Dorsolateral prefrontal cortex (tissue), 120 donors: ENCODE measurements at regions of chr6 and their contacts with region 1.

Region 1: GRCh38 chr6:108113557-108114519 is 39.3 kb upstream of the OSTM1 start:
- DNase-seq: no peak
- H3K4me3 ChIP-seq: peak overlapping the region in 50 of 59 donors; percentile 13 to 67 (median 42)
- H3K27ac ChIP-seq: no peak overlapping the region
- H3K27me3 ChIP-seq: peaks cover 0 to 74% (median 33%) of the 10 kb centered on the region in 45 donors
- CTCF ChIP-seq: peak; percentile 38 to 80 (median 65)

Region 2: DNA sequence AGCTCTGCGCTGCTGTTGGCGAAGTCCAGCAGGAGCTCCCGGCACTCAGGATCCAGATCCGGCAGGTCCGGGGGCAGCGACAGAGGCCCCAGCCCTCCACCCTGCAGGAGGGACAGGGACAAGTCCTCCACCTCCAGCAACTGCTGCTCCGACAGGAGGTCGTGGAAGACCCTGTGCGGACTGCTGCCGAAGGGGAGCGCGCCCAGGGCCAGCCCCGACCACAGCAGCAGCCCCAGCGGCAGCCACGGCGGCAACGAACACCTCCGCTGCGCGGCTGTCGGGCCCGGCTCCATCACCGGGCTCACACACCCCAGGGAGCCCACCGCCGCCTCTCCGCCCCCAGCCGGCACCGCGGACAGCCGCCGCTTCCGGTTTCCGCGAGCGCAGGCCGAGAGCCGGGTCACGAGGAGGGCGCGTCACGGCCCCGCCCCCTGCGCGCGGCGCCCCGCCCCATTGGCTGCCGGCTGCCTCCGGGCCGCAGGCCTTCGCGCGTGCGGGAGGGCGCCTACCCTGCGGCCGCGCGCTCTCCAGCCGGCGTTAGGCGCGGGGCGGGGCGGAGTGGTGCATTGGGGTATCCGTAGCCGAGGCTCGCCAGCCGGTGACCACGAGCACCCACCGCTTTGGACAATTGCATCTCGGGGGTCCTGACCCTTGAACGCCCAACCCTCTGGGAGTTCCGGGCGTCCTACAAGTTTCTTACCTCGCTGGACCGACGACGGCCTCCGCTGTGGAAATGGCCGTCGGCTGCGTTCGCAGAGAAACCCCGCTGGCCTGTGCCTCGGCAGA is 39.3 kb before region 1 on chr6 and contains the start of gene OSTM1:
- intact Hi-C with region 1: loop called in 1 of 2 experiments (anchors 5 kb)
- DNase-seq: peak; percentile 76 to 96 (median 86)
- H3K4me3 ChIP-seq: peak within 1 kb of the TSS; percentile 59 to 100 (median 98)
- H3K27ac ChIP-seq: peak within 1 kb of the TSS; percentile 3 to 94 (median 85)
- H3K27me3 ChIP-seq: no peaks in the 10 kb centered on the region
- CTCF ChIP-seq: peak in 23 of 56 donors; percentile 3 to 64 (median 22)
- total RNA-seq, gene OSTM1: 19.6 to 54.7 (median 38.3) TPM

Region 3: GRCh38 chr6:108168501-108169463 is 54.9 kb after region 1 on chr6:
- intact Hi-C with region 1: loop called in 1 of 2 experiments (anchors 5 kb)
- DNase-seq: no peak
- H3K4me3 ChIP-seq: peak overlapping the region in 58 of 59 donors; percentile 22 to 71 (median 52)
- H3K27ac ChIP-seq: peak overlapping the region in 40 of 59 donors; percentile 6 to 81 (median 63)
- H3K27me3 ChIP-seq: peaks cover 5 to 87% (median 63%) of the 10 kb centered on the region in 45 donors
- CTCF ChIP-seq: peak in 32 of 56 donors; percentile 11 to 51 (median 22)

Region 4: GRCh38 chr6:108438918-108439317 is 325.1 kb after region 1 on chr6:
- intact Hi-C with region 1: no loop called
- DNase-seq: no peak
- H3K4me3 ChIP-seq: no peak overlapping the region
- H3K27ac ChIP-seq: peak overlapping the region in 2 of 59 donors; percentile 8 to 56
- H3K27me3 ChIP-seq: no peaks in the 10 kb centered on the region
- CTCF ChIP-seq: no peak

Region 5: DNA sequence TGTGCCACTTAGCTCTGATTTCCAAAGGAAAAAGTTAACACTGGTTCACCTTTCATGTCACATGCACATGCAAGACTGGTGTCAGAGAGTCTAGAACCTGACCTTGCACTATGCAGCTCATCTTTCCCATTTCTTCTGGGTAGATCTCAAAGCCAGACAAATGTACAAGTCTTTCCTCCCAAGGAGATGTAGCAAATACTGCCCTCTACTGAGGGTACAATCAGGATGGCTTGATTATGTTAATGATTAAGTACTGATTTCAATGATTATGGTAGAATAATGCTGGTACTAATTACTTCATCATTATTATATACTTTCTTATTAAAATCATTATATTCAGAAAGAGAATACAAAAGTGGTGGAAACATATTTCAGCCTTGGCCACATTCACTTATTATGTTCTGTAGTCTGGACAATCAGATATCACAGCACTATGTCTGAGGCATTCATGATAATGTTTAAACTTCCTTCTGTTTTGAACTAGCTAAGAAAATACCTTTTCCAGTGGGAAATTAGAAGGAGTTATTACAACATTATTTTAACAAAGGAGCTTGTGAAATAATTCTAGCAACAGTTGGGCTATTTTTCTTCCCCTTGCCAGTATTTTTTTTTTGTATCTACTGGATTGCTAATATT is 378.4 kb after region 1 on chr6:
- intact Hi-C with region 1: loop called (anchors 2 to 10 kb)
- DNase-seq: no peak
- H3K4me3 ChIP-seq: no peak overlapping the region
- H3K27ac ChIP-seq: no peak overlapping the region
- H3K27me3 ChIP-seq: no peaks in the 10 kb centered on the region
- CTCF ChIP-seq: peak; percentile 19 to 84 (median 66)

Region 6: DNA sequence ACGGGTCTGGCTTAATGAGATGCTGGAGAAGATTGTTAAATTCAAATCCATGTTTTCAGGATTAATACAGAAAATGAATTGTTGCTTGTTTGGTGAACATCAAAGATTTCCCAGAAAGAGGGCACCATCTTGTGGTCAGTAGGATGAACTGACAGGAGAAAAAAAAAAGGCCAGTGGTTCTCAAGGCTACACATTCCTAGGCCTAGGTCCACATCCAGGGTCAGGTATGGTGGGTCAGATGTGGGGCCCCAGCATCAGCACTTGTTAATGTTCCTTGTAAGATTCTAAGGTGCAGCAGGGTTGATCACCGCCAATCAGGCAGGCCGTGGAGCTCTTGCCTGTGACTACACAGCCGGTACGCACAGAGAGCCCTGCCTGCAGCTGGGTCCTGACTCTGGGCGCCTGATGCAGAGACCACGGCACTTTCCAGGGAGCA is 412.9 kb after region 1 on chr6:
- intact Hi-C with region 1: loop called (anchors 2 to 5 kb)
- DNase-seq: no peak
- H3K4me3 ChIP-seq: no peak overlapping the region
- H3K27ac ChIP-seq: no peak overlapping the region
- H3K27me3 ChIP-seq: no peaks in the 10 kb centered on the region
- CTCF ChIP-seq: peak; percentile 68 to 93 (median 86)